Head of caudate nucleus (tissue), 42 donors: ENCODE measurements at regions of chr4 and their contacts with region 1.

Region 1: DNA sequence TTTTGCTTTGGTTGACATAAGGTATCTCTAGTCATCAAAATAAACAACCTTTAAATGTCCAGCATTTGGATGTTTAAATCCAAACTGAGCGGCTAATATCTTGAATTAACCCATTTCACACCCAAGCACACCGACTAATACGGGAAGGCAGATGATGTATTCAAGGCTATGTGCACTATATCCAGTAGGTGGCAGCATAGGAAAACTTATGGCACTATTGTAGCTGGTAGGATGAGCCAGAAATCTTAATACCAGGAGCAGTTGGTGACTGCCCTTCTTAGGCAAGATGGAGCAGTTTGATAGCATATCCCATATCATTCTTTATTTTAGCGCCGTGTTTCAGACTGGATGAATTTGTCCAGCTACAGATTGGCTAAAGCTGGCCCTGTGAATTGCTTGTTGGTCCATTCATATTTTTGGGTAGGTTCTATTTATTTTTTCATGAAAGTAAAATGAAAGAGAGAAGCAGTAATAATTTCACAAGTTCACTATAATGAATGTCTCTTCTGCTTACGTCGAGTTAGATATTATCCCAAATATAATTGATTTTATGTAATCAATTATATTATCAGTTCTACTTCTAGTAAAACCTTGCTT is 24.4 kb downstream of the UCHL1 start:
- DNase-seq: peak in 25 of 42 donors; percentile 12 to 85 (median 54)

Region 2: DNA sequence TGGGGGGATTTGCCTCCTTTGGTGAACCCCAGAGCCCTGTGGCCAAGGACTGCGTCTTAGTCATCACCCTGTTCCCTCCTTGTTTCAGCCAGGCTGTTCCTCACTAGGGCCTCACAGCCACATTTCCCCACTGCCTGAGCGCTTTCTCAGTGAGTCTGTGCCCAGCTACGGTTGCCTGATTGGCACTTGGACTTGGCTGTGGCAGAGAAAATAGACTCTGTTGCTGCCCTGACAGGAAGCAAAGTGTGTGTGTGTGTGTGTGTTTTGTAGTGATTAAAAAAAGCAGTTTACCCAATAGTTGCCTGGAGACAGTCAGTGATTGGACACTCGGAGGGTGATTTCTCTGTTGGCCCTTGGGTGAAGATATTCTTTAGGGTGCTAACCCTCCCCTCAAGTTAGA is 88.6 kb after region 1 on chr4:
- intact Hi-C with region 1: no loop called
- DNase-seq: peak in 36 of 42 donors; percentile 19 to 85 (median 56)

Region 3: GRCh38 chr4:41661442-41662076 is 380.4 kb after region 1 on chr4:
- intact Hi-C with region 1: loop called (anchors 5 kb)
- DNase-seq: peak in 40 of 42 donors; percentile 46 to 89 (median 75)

Region 4: GRCh38 chr4:41887821-41888686 is 606.9 kb after region 1 on chr4:
- intact Hi-C with region 1: loop called (anchors 5 kb)
- DNase-seq: peak in 36 of 42 donors; percentile 28 to 86 (median 62)